ENCODE measurements at regions of chr19 and their contacts with region 1.

Region 1: DNA sequence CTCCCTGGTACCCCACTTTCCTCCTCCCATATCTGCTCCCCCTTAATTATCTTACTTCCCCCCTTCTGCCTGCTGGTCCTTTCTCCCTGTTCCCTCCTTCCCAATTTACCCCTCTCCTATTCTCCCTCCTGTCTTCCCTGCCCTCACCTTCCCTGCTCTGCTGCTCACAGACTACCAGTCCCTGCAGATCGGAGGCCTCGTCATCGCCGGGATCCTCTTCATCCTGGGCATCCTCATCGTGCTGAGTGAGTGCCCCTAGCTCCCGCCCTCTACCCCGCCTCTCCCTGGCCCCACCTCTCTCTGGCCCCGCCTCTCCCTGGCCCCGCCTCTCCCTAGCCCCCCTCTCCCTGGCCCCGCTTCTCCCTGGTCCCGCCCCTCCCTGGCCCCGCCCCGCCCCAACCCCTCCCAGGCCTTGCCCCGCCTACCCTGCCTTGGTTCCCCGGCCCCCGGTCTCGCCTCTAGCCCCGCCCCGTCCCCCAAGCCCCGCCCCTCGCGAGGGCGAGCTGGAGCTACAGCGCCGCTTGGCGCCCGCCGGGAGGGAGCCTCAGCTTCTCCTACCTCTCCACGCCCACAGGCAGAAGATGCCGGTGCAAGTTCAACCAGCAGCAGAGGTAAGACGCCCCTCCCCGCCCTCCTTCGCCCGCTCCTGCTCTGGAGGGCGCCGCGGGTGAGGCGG is 2.0 kb upstream of the FXYD7 start:
- DNase-seq: peak; percentile 87 to 90 (median 89)
- H3K4me3 ChIP-seq: peak overlapping the region in 3 of 7 experiments; percentile 28 to 43 (median 37)
- H3K27ac ChIP-seq: no peak overlapping the region
- H3K4me1 ChIP-seq: peaks cover 0 to 39% (median 33%) of the 10 kb centered on the region in 4 experiments
- H3K27me3 ChIP-seq: peaks cover 0 to 33% (median 17%) of the 10 kb centered on the region in 5 experiments

Region 2: GRCh38 chr19:35114353-35115176 is 26.5 kb before region 1 on chr19:
- CTCF ChIA-PET with region 1: interaction called, 54 read pairs
- POLR2A ChIA-PET with region 1: interaction called, 4 read pairs
- DNase-seq: peak; percentile 82 to 88 (median 83)
- H3K4me3 ChIP-seq: peak overlapping the region in 6 of 7 experiments; percentile 36 to 73 (median 54)
- H3K27ac ChIP-seq: no peak overlapping the region
- H3K4me1 ChIP-seq: peaks cover 1 to 59% (median 32%) of the 10 kb centered on the region in 4 experiments
- H3K27me3 ChIP-seq: no peaks in the 10 kb centered on the region

Region 3: DNA sequence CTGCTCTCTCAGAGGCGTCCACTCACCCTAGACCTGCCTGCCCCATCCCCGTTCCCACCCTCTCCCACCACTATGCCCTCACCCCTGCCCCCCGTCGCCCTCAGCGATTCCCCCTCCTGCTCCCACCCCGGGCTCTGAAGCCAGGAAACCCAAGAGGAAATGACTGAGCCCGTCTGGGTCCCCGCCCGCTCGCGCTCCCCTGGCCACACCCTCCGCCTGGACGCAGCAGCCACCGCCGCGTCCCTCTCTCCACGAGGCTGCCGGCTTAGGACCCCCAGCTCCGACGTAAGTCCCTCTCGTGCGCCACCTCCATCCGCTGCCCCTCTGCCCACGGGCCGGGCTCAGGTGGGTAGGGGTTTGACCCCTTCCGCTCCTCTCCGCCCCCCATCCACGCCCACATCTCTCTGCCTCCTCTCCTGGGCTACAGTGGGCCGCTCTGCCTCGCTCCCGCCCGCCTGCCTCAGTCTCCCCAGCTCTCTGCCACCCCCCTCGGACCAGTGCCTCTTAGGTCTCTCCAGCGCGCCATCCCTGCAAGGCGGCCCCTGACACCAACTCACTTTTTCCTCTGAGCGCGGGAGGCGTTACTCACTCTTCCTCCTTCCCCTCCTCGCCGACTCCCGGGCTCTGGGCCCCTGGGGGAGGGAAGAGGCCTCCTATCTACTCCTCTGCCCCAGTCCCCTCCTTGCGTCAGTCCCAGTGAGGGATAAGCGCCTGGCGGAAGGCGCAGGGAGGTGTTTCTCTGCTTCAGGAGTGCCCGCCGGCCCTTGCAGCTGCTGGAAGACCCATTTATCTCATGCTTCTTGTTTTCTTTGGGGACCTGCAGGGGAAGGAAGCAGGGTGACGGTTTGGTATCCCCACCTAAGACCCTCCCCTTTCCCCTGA is 13.7 kb after region 1 on chr19 and contains the start of gene FXYD5:
- CTCF ChIA-PET with region 1: interaction called, 38 read pairs
- POLR2A ChIA-PET with region 1: interaction called, 14 read pairs
- DNase-seq: peak; percentile 72 to 83 (median 77)
- H3K4me3 ChIP-seq: peak within 1 kb of the TSS; percentile 51 to 97 (median 89)
- H3K27ac ChIP-seq: peak within 1 kb of the TSS; percentile 66 to 88
- H3K4me1 ChIP-seq: peaks cover 2 to 49% (median 42%) of the 10 kb centered on the region in 4 experiments
- H3K27me3 ChIP-seq: no peaks in the 10 kb centered on the region

Region 4: DNA sequence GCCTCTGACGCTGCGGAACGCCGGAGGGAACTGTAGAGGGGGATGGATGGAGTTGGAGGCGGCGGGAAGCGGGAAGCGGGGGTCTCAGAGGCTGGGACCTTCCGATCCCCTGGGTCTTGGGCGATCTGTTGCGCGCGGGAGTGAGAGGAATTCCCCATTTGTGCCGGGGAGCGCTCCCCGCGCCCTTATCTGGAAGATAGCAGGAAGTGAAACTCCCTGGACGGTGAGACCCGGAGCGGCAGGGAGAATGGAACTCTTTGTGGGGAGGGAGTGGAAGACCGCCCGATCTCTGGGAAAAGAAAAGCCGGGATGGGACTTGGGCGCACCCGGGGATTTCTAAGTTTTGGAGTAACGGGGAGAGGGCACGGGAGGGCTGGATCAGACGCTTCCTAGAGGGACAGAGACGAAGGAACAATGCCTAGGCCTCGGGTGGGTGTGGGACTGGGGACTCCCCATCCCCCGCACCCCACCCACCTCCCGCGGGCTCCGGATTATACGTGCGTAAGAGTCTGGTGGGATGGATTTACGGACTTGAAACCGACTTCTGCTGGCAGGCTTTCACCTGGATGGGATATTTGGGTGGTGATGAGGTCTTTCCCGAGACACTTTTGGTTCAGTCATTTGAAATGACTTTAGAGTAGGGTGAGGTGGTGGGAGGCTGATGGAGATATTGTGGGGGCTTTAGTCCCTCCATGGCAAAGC is 108.2 kb after region 1 on chr19:
- CTCF ChIA-PET with region 1: interaction called, 10 read pairs
- POLR2A ChIA-PET with region 1: no interaction called
- DNase-seq: no peak
- H3K4me3 ChIP-seq: peak overlapping the region; percentile 34 to 89 (median 75)
- H3K27ac ChIP-seq: peak overlapping the region in 1 of 2 experiments; percentile 71
- H3K4me1 ChIP-seq: peaks cover 0 to 30% (median 19%) of the 10 kb centered on the region in 4 experiments
- H3K27me3 ChIP-seq: peaks cover 0 to 18% (median 6%) of the 10 kb centered on the region in 5 experiments